ENCODE measurements at regions of chr17 and their contacts with region 1.

Region 1: GRCh38 chr17:51748749-51749539 is 409.6 kb downstream of the CA10 start:
- DNase-seq: no peak
- ATAC-seq: no peak
- H3K4me3 Mint-ChIP-seq: no peak overlapping the region
- H3K27ac Mint-ChIP-seq: no peak overlapping the region
- H3K4me1 Mint-ChIP-seq: no peaks in the 10 kb centered on the region
- H3K27me3 Mint-ChIP-seq: no peaks in the 10 kb centered on the region
- CTCF ChIP-seq: no peak

Region 2: DNA sequence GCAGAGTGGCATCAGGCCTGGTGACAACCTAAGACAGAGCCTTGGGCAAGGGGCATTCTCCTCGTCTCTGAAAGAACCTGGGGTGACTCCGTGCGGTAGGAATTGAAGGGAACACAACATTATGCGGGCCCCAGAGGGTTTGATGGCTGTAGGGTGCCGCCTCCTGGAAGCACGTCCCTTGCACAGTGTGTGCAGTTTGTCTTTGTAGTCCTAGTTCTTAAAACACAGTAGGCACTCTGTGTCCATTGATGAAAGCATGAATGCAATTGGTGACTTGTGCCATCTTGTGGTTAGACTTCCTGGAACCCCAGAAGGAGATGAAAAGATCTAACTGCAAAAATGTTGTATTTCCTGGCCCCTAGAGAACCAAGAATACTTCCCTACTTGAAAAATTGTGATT is 208.8 kb before region 1 on chr17:
- CTCF ChIA-PET with region 1: no interaction called
- POLR2A ChIA-PET with region 1: no interaction called
- intact Hi-C with region 1: no loop called
- DNase-seq: no peak
- ATAC-seq: no peak
- H3K4me3 Mint-ChIP-seq: no peak overlapping the region
- H3K27ac Mint-ChIP-seq: no peak overlapping the region
- H3K4me1 Mint-ChIP-seq: no peaks in the 10 kb centered on the region
- H3K27me3 Mint-ChIP-seq: peaks cover 2% of the 10 kb centered on the region
- CTCF ChIP-seq: no peak

Region 3: DNA sequence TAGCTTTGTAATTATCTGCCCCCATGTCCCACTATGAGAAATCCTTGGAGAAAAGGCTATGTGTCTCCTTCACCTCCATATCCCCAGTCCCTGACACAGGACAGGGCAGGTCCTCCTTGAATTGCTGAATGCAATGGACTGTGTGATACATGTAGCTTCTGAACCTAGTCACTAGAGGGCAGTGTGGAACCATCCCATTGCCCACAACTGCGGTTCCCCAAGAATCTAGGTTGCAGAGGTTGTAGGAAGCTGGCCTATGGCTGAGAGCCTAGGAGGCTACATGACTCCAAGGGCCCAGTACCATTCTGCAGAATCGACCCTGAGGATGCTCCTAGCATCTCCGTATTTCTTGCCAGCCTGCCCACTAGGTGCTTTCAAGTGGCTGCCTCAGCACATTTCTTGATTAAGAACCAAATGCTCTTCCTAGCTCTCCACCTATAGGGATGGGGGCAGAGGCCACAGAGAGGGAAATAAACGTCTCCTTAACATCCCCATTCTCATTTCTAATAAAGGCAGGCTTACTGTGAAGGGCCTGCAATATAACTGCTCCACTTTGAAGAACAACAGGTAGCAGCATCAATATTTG is 15.5 kb after region 1 on chr17:
- CTCF ChIA-PET with region 1: interaction called, 18 read pairs
- POLR2A ChIA-PET with region 1: no interaction called
- intact Hi-C with region 1: no loop called
- DNase-seq: no peak
- ATAC-seq: peak; percentile 47
- H3K4me3 Mint-ChIP-seq: no peak overlapping the region
- H3K27ac Mint-ChIP-seq: no peak overlapping the region
- H3K4me1 Mint-ChIP-seq: no peaks in the 10 kb centered on the region
- H3K27me3 Mint-ChIP-seq: peaks cover 6% of the 10 kb centered on the region
- CTCF ChIP-seq: no peak